ENCODE measurements at regions of chr15 and their contacts with region 1.

Region 1: GRCh38 chr15:84981054-84981710 is 474 bp upstream of the PDE8A start:
- DNase-seq: peak; percentile 97
- ATAC-seq: peak; percentile 96

Region 2: GRCh38 chr15:85003593-85004312 is 22.6 kb after region 1 on chr15:
- intact Hi-C with region 1: loop called (anchors 2 kb)
- DNase-seq: no peak
- ATAC-seq: peak; percentile 24

Region 3: DNA sequence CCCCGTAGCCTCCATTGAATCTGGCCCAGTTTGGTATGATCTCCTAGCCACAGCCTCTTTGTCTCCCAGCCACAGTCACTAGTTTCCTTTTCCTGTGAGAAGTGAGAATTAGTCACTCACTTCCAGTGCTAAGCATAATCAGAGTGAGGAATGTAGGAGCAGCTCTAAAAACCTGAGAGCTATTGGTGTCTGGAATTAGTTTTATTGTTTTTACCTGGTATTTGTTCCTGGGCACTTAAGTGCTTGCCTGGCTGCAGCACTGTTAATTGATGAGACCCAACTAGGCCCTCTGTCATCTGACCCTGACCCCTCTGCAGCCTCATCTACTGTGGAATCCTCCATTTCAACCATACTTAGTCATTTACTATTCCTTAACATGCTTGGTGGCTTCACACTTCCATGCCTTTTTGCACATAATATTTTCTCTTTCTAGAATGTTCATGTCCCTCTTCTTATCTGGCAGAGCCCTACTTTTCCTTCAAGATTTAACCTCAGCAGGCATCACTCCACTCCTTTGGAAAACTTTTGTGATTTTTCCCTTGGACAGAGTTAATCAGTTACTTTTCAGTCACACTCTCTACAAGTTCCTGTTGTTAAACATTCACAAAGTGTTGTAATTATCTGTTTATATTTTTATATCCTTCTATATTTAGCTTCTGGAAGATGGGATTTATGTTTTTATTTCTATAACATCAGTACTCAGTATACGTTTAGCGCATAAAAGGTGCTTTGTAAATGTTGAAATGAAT is 49.3 kb after region 1 on chr15:
- intact Hi-C with region 1: loop called (anchors 5 kb)
- DNase-seq: no peak
- ATAC-seq: no peak

Region 4: DNA sequence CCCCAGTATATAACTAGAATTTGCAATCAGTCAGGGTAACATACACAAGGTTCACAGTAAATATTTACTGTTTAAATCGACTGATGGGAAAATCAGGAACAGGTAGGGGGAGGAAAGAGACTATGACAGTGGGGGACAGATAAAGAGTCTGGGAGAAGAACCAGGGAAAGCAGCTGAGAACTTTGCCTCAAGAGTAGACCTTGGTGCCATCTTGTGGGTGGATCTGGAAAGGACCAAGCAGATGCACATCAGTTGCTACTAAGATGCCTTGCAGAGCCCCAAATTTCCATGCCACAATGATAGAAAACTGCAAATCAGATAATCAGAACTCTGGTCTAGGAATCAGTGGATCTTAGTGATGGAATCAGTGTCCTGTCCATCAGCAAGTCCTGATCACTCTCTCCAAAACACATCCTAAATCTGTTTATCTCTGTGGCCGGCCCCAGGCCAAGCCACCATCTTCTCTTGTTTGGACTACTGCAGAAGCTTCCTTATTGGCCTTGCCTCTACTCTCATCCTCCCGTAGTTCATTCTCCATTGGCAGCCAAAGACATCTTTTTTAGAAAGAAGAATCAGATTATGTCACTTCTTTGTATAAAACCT is 63.2 kb after region 1 on chr15:
- intact Hi-C with region 1: loop called (anchors 2 kb)
- DNase-seq: no peak
- ATAC-seq: peak; percentile 67